Motor neuron (in vitro differentiated cells): ENCODE measurements at regions of chr10 and their contacts with region 1.

Region 1: GRCh38 chr10:21399392-21400035 is 126.0 kb downstream of the SKIDA1 start:
- ATAC-seq: peak; percentile 72 to 97 (median 82)
- H3K4me3 ChIP-seq: no peak overlapping the region
- H3K27ac ChIP-seq: no peak overlapping the region
- H3K4me1 ChIP-seq: peaks cover 12% of the 10 kb centered on the region in 2 donors

Region 2: DNA sequence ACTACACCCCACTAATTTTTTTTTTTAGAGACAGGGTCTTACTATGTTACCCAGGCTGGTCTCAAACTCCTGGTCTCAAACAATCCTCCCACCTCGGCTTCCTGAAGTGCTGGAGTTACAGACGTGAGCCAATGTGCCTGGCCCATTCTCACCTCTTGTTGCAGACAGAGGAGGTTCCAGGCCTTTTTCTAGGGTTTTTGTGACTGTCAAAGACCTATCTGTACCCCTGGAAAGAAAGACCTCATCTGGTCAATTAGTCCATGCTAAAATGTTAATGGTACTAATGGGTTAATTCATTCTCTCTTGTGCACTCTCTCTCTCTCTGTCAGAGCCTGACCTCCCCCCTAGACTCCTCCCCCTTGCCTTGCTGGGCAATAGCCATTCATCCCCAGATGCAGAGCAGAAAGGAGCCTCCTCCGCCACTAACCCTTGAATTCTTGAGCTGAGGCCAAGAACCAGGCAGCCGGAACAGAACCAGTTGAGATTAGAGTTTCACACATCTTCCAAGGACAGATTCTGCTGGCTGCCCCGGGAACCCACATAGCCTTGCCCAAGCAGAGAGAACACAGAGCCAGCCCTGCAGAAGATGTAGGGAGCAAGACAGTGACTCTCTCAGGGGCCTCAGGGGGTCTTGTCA is 83.8 kb before region 1 on chr10:
- in situ Hi-C with region 1: loop called in 1 of 9 experiments (anchors 25 kb)
- ATAC-seq: peak; percentile 77 to 91 (median 87)
- H3K4me3 ChIP-seq: no peak overlapping the region
- H3K27ac ChIP-seq: peak overlapping the region in 1 of 2 donors; percentile 66
- H3K4me1 ChIP-seq: peaks cover 27 to 37% of the 10 kb centered on the region in 2 donors